Prostate gland (tissue), 2 donors: ENCODE measurements at regions of chr14 and their contacts with region 1.

Region 1: DNA sequence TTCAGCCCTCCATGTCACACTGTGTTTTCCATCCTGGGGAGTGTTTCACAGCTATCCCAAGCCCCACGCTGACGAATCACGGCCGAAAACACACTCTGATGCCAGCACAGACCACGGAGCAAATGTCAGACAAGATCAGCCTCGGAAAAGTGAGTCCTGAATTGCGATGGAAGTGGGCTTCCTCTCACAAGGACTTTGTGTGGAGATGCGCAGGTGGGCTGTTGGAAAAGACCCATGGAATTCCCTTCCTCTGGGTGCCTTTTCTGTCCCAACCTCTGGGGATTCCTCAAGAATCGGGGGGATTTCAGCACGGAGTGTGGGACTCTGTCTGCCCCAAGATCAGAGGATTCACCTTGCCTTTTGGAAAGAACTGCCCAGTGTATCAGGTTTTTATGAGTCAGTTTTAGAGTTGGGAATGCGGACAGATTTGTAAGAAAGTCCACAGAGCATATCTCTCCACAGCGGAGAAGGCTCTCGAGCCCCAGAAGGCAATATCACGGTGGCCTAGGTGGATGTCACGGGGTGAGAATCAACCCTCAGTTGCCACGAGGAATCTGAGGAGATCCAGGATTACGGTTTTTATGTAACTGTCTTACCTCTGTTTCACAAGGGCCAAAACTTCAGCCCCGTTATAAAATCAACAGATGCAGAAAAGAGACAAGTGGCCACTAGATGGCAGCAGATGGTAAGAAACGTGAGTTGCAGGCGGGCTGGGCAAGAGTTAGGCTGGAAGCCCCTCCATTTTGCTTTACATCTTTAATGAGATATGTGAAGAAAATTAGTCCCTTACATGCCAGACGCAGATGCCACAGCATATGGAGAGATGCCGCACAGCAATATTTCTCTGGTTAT is 201.9 kb downstream of the DAD1 start:
- DNase-seq: peak; percentile 67
- H3K4me3 ChIP-seq: no peak overlapping the region
- H3K27ac ChIP-seq: no peak overlapping the region
- H3K4me1 ChIP-seq: no peaks in the 10 kb centered on the region
- H3K27me3 ChIP-seq: no peaks in the 10 kb centered on the region
- CTCF ChIP-seq: peak; percentile 68 to 90 (median 74)
- POLR2A ChIP-seq: no peak

Region 2: GRCh38 chr14:22472935-22473854 is 86.0 kb after region 1 on chr14:
- intact Hi-C with region 1: loop called (anchors 5 kb)
- DNase-seq: peak; percentile 50
- H3K4me3 ChIP-seq: no peak overlapping the region
- H3K27ac ChIP-seq: no peak overlapping the region
- H3K4me1 ChIP-seq: no peaks in the 10 kb centered on the region
- H3K27me3 ChIP-seq: no peaks in the 10 kb centered on the region
- CTCF ChIP-seq: peak; percentile 14 to 65 (median 64)
- POLR2A ChIP-seq: no peak

Region 3: GRCh38 chr14:22556990-22557623 is 170.0 kb after region 1 on chr14:
- intact Hi-C with region 1: loop called (anchors 5 kb)
- DNase-seq: peak; percentile 65
- H3K4me3 ChIP-seq: peak overlapping the region; percentile 10 to 20
- H3K27ac ChIP-seq: peak overlapping the region; percentile 43 to 55
- H3K4me1 ChIP-seq: no peaks in the 10 kb centered on the region
- H3K27me3 ChIP-seq: no peaks in the 10 kb centered on the region
- CTCF ChIP-seq: peak; percentile 97 to 99 (median 98)
- POLR2A ChIP-seq: no peak

Region 4: DNA sequence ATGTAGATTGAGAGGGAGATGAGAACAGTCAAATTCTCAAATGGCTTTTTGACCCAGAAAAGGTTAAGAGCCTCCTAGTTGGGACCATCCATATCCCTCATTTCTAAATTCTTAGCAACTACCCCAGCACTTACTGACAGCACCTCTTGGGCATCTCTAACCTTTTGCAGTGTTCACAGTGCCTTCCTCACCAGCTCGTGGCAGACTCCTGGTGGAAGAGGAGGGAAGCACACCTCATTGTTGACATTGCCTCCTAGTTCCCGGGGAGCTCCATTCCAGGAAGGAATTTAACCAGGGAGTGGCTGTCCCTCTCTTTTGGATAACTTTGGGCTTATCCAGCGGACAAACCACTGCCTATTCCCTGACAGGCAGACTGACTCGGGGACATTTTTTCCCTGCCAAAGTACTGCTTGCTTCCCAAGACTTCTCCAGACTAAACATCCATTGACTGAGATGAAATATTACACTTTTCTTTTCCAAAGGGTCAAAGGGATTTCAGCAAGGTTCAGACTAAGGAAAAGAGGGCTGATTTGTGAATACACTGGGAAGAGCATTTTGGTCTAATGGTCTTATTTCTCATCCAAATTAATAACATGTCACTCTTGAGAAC is 266.0 kb after region 1 on chr14:
- intact Hi-C with region 1: loop called (anchors 5 kb)
- DNase-seq: peak; percentile 59
- H3K4me3 ChIP-seq: no peak overlapping the region
- H3K27ac ChIP-seq: no peak overlapping the region
- H3K4me1 ChIP-seq: no peaks in the 10 kb centered on the region
- H3K27me3 ChIP-seq: no peaks in the 10 kb centered on the region
- CTCF ChIP-seq: peak; percentile 47 to 81 (median 76)
- POLR2A ChIP-seq: no peak